ENCODE measurements at regions of chr2 and their contacts with region 1.

Region 1: GRCh38 chr2:11296401-11296800 is 48.0 kb downstream of the ROCK2 start:
- DNase-seq: no peak
- H3K4me3 ChIP-seq: no peak overlapping the region
- H3K27ac ChIP-seq: no peak overlapping the region
- H3K4me1 ChIP-seq: peaks cover 11% of the 10 kb centered on the region
- CTCF ChIP-seq: no peak

Region 2: GRCh38 chr2:11411768-11412448 is 115.5 kb after region 1 on chr2:
- CTCF ChIA-PET with region 1: no interaction called
- POLR2A ChIA-PET with region 1: interaction called, 10 read pairs
- intact Hi-C with region 1: no loop called
- DNase-seq: peak; percentile 39
- H3K4me3 ChIP-seq: peak overlapping the region; percentile 34
- H3K27ac ChIP-seq: no peak overlapping the region
- H3K4me1 ChIP-seq: peaks cover 6% of the 10 kb centered on the region
- CTCF ChIP-seq: peak; percentile 82

Measured in OCI-LY7 (cell line).